ENCODE measurements at regions of chr1 and their contacts with region 1.

Region 1: DNA sequence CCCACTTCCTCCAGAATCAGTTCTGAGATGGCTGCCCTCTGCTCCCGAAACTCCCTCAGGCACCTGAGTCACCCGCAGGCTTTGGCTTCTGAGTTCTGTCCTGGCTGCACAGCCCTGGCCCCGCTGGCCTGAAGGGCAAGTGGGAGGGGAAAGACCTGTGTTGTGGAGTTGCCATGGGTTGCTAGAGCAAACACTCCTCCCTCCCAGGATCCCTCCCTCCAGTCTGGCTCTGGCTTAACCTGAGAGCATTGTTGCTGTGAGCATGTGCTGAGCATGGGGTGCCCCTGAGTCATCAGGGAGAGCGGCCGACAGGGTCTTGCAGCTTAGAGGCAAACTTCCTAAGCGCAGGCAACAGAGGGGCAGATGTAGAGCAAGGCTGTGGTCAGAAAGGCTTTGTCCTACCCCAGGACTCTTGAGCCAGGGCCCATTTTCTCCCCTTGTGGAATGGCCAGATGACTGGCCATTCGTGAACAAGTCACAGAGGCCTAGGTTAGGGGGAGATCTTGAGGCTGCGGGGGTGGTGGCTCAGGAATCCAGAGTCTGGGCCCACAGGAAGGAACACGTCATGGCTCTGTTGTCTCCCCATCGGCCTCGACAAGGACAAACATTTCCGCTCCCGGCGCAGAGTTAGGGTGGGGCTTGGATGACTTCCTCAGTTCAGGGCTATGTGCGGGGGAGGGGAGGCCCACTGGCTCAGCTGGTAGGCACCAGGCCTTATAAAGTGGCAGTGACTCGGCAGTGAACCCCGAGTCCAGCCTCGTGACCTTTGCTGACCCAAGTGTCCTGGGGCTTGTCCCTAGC is at the start of gene DYNLT4:
- DNase-seq: peak; percentile 95
- H3K4me3 Mint-ChIP-seq: peak within 1 kb of the TSS; percentile 73
- H3K27ac Mint-ChIP-seq: peak within 1 kb of the TSS; percentile 98
- H3K4me1 Mint-ChIP-seq: peaks cover 90% of the 10 kb centered on the region
- H3K27me3 Mint-ChIP-seq: no peaks in the 10 kb centered on the region
- total RNA-seq, gene DYNLT4: 0.40 to 0.41 TPM

Region 2: GRCh38 chr1:44674113-44675000 is 133.1 kb before region 1 on chr1 and contains the starts of genes ARMH1 and TMEM53:
- CTCF ChIA-PET with region 1: no interaction called
- POLR2A ChIA-PET with region 1: interaction called, 4 read pairs
- intact Hi-C with region 1: loop called (anchors 5 kb)
- DNase-seq: peak; percentile 99
- H3K4me3 Mint-ChIP-seq: peak within 1 kb of the TSS; percentile 83
- H3K27ac Mint-ChIP-seq: peak within 1 kb of the TSS; percentile 88
- H3K4me1 Mint-ChIP-seq: peaks cover 23% of the 10 kb centered on the region
- H3K27me3 Mint-ChIP-seq: no peaks in the 10 kb centered on the region
- total RNA-seq, gene ARMH1: 134 to 141 TPM
- total RNA-seq, gene TMEM53: 5.1 to 6.5 TPM

Region 3: GRCh38 chr1:44786138-44786840 is 21.2 kb before region 1 on chr1:
- CTCF ChIA-PET with region 1: interaction called, 12 read pairs
- POLR2A ChIA-PET with region 1: interaction called, 7 read pairs
- intact Hi-C with region 1: no loop called
- DNase-seq: peak; percentile 83
- H3K4me3 Mint-ChIP-seq: peak overlapping the region; percentile 73
- H3K27ac Mint-ChIP-seq: peak overlapping the region; percentile 31
- H3K4me1 Mint-ChIP-seq: peaks cover 31% of the 10 kb centered on the region
- H3K27me3 Mint-ChIP-seq: no peaks in the 10 kb centered on the region

Region 4: DNA sequence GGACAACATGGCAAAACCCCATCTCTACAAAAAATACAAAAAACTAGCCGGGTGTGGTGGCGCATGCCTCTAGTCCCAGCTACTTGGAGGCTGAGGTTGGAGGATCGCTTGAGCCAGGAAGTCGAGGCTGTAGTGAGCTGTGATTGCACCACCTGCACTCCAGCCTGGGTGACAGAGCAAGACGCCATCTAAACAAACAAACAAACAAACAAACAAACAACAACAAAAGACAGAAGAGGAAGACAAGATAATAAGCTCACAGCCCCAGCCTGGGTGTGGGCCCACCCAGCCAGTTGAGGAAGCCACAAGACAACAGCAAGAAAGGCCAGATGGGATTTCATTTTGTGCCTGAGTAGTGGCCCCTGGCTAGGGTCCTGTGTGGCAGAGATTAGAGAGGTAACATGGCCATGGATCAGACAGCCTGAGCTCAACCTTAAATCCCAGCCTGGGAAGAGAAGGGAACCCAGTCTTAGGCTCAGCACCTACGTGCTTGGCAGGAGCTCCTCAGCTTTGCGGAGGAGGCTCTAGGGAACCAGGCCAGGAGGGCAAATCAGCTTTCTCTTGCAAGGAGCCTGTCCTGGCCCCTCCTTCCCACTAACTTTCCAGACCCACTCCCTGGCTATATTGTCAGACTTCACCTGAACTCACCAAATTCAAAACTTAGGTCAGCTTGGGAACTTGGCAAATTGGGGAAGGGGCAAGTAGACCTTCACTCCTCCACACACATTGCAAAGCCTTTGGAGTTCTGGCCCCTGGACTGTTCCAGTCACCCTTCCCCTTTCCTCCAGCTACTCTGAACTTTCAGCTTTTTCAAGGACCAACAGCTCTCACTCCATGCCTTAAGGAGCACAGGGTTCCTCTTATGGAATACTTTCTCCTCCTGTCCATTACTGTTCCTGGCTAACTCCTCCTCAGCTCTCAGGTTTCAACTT is 14.4 kb before region 1 on chr1:
- CTCF ChIA-PET with region 1: interaction called, 22 read pairs
- POLR2A ChIA-PET with region 1: interaction called, 263 read pairs
- intact Hi-C with region 1: no loop called
- DNase-seq: peak; percentile 1
- H3K4me3 Mint-ChIP-seq: no peak overlapping the region
- H3K27ac Mint-ChIP-seq: no peak overlapping the region
- H3K4me1 Mint-ChIP-seq: no peaks in the 10 kb centered on the region
- H3K27me3 Mint-ChIP-seq: no peaks in the 10 kb centered on the region

Region 5: DNA sequence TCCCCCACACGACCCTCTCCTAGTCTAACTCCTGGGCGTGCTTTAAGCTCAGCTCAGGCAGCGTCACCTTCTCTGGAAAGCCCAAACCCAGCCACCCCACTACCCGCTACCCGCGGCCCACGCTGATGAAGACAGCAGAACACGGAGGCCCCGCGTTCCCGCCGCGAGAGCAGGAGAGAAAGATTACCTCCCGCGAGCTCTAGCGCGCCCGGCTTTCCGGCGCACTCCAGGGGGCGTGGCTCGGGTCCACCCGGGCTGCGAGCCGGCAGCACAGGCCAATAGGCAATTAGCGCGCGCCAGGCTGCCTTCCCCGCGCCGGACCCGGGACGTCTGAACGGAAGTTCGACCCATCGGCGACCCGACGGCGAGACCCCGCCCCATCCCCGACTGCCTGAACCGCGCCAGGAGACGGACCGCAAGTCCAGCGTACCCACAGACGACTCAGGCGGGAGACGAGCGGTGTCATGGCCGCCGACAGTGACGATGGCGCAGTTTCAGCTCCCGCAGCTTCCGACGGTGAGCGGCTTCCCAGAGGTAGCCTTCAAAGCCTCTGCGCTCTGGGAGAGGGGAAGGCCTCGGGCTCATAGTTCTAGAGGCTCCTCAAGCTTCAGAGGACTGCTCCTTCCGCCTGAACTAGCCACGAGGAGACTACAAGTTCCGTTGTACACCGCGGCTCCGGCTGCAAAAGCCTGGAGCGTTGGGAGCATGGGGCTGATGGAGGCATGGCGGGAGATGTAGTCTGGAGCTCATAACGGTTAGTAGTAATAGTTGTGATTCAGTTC is 532.5 kb after region 1 on chr1 and contains the starts of genes MUTYH and TOE1:
- CTCF ChIA-PET with region 1: no interaction called
- POLR2A ChIA-PET with region 1: interaction called, 11 read pairs
- intact Hi-C with region 1: no loop called
- DNase-seq: peak; percentile 97
- H3K4me3 Mint-ChIP-seq: peak within 1 kb of the TSS; percentile 93
- H3K27ac Mint-ChIP-seq: peak within 1 kb of the TSS; percentile 98
- H3K4me1 Mint-ChIP-seq: peaks cover 34% of the 10 kb centered on the region
- H3K27me3 Mint-ChIP-seq: no peaks in the 10 kb centered on the region
- total RNA-seq, gene MUTYH: 49.2 to 51.8 TPM
- total RNA-seq, gene TOE1: 22.8 to 23.1 TPM

Measured in activated CD4-positive, alpha-beta memory T cell treated with anti-CD3 and anti-CD28 coated beads for 36 hours (primary cell).